ENCODE measurements at regions of chr4 and their contacts with region 1.

Region 1: DNA sequence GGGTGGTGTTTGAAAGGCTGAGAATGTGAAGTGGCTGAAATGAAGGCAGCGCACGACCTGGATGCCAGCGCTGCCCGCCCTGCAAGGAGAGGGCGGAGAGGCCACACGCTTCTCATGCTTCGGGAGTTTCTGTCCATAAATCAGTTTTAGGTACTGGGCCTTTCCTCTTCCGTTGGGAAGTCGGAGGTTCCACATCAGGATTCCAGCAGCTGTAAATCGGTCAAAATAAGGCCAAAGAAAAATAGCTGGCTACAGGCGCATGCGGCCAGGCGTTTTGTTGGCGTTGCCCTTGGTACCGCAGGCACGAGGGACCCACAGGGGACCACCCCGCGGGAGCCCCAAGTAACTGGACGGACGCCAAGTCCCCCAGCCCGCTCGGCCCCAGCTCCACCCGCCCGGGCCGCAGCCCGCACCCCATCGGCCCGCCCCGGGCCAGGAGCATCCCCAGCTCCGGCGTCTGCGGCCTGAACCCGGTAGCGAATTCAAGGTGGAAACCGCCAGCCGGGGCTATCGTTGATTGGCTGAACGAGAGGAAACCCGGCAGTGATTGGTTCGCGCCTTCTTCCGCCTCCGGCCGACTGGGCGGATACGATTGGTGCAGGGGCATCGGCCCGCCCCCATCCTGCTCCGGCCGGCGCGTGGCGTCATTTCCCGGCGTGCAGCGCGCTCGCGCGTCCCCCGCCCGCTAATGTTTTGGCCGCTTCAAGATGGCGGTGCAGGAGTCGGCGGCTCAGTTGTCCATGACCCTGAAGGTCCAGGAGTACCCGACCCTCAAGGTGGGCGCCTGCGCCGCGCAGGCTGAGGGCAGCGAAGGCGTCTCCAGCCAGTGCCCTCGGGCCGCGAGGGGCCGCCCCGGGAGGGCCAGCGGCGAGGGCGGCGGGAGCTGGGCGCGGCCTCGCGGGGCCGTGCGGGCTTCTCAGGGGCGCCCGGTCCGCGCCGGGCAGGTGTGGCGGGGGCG is at the start of gene MAEA:
- DNase-seq: peak; percentile 98
- H3K4me3 Mint-ChIP-seq: peak within 1 kb of the TSS; percentile 97
- H3K27ac Mint-ChIP-seq: peak within 1 kb of the TSS; percentile 88
- H3K4me1 Mint-ChIP-seq: peaks cover 32% of the 10 kb centered on the region
- H3K27me3 Mint-ChIP-seq: peaks cover 2% of the 10 kb centered on the region
- total RNA-seq, gene MAEA: 67.1 and 68.1 TPM in 2 replicates

Region 2: GRCh38 chr4:891747-892146 is 397.7 kb before region 1 on chr4:
- intact Hi-C with region 1: no loop called
- DNase-seq: no peak
- H3K4me3 Mint-ChIP-seq: no peak overlapping the region
- H3K27ac Mint-ChIP-seq: no peak overlapping the region
- H3K4me1 Mint-ChIP-seq: no peaks in the 10 kb centered on the region
- H3K27me3 Mint-ChIP-seq: no peaks in the 10 kb centered on the region

Region 3: GRCh38 chr4:1055721-1056590 is 233.5 kb before region 1 on chr4:
- intact Hi-C with region 1: loop called (anchors 5 kb)
- DNase-seq: peak; percentile 73
- H3K4me3 Mint-ChIP-seq: peak overlapping the region; percentile 61
- H3K27ac Mint-ChIP-seq: peak overlapping the region; percentile 52
- H3K4me1 Mint-ChIP-seq: peaks cover 9% of the 10 kb centered on the region
- H3K27me3 Mint-ChIP-seq: peaks cover 14% of the 10 kb centered on the region

Region 4: GRCh38 chr4:1167247-1167949 is 122.1 kb before region 1 on chr4:
- intact Hi-C with region 1: loop called (anchors 1 kb)
- DNase-seq: peak; percentile 83
- H3K4me3 Mint-ChIP-seq: peak overlapping the region; percentile 79
- H3K27ac Mint-ChIP-seq: peak overlapping the region; percentile 69
- H3K4me1 Mint-ChIP-seq: peaks cover 15% of the 10 kb centered on the region
- H3K27me3 Mint-ChIP-seq: peaks cover 13% of the 10 kb centered on the region

Region 5: DNA sequence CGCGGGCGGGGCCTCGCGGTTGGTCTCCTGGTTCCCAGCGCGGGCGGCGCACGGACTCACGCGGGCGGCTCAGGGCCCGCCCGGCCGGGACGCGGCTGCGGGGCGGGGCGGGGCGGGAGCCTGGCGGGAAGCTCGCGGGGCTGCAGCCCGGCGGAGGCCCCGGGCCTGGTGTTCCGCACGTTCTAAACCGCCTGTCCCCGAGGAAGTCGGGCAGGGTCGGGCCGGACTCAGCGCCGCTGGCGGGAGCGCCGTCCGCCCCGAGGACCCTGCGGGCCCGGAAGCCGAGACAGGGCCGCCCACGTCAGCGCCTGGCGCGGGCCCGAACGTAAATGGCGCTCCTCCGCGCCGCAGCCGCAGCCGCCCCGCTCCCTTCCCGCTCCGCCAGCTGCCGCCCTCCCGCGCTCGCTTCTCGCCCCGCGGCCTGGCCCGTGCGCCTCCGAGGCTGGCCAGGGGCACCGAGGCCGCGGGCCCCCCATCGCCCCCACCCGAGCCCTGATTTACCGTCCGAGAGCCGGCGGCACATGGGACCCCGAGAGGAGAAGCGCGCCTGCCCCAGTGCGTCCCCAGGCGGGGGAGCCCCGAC is 40.2 kb before region 1 on chr4:
- intact Hi-C with region 1: loop called (anchors 1 kb)
- DNase-seq: peak; percentile 83
- H3K4me3 Mint-ChIP-seq: peak overlapping the region; percentile 89
- H3K27ac Mint-ChIP-seq: peak overlapping the region; percentile 96
- H3K4me1 Mint-ChIP-seq: peaks cover 57% of the 10 kb centered on the region
- H3K27me3 Mint-ChIP-seq: no peaks in the 10 kb centered on the region

Region 6: GRCh38 chr4:1329408-1330371 is 40.2 kb after region 1 on chr4:
- intact Hi-C with region 1: loop called (anchors 1 kb)
- DNase-seq: no peak
- H3K4me3 Mint-ChIP-seq: no peak overlapping the region
- H3K27ac Mint-ChIP-seq: no peak overlapping the region
- H3K4me1 Mint-ChIP-seq: peaks cover 31% of the 10 kb centered on the region
- H3K27me3 Mint-ChIP-seq: no peaks in the 10 kb centered on the region

Region 7: GRCh38 chr4:1721004-1721665 is 431.6 kb after region 1 on chr4 and contains the starts of genes TACC3 and TMEM129:
- intact Hi-C with region 1: loop called (anchors 5 kb)
- DNase-seq: peak; percentile 90
- H3K4me3 Mint-ChIP-seq: peak within 1 kb of the TSS; percentile 94
- H3K27ac Mint-ChIP-seq: peak within 1 kb of the TSS; percentile 97
- H3K4me1 Mint-ChIP-seq: peaks cover 45% of the 10 kb centered on the region
- H3K27me3 Mint-ChIP-seq: no peaks in the 10 kb centered on the region
- total RNA-seq, gene TACC3: 134 and 139 TPM in 2 replicates
- total RNA-seq, gene TMEM129: 27.4 and 28.4 TPM in 2 replicates

Measured in activated T-helper 1 cell treated with anti-CD3 and anti-CD28 coated beads, Interleukin-12 subunit alpha, Interleukin-12 subunit beta, Interleukin-2, Interleukin-4 antibody, amounts not matched to agents 30 ng/mL and 10 ng/mL and 1 ng/mL, durations not matched to agents 14 hours and 24 hours and 36 hours (primary cell).